ENCODE measurements at regions of chr10 and their contacts with region 1.

Region 1: GRCh38 chr10:44310762-44311562 is 73.9 kb downstream of the CXCL12 start:
- DNase-seq: peak; percentile 89 to 96 (median 96)
- ATAC-seq: peak; percentile 97 to 98
- H3K4me3 ChIP-seq: peak overlapping the region; percentile 16
- H3K27ac ChIP-seq: no peak overlapping the region
- H3K4me1 ChIP-seq: no peaks in the 10 kb centered on the region
- H3K27me3 ChIP-seq: no peaks in the 10 kb centered on the region

Region 2: DNA sequence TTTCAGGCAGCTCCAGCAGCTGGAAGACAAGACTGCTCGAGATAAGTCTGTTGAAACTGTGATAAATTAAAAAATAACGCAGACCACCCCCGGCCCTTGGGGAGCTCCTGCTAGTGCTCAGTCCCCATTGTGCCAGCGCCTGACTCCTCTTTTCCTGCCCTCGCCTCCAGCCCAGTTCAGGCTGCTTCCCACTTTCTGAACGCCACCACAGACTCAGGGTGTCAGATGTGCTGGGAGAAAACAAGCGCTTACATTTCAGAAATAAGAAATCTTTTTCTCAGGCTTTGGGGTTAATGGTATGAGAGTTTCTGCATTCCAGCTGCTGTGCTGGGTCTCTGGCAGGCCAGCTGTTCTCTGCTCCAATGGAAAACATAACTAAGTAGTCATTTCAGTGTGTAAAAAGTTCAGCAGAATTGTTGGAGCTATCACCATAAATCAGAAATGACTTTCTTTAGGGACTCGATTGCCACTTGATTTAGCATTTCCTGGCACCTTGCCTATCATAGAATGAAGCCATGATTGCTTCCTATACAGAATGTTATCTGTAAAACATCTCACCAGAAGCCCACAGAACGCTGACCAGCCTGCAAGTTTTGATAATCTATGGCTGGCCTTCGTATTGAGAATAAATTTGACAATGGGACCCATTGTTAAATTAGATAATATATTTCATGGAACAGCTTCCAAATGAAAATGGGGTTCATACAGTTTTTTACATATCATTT is 405.3 kb before region 1 on chr10:
- intact Hi-C with region 1: loop called in 1 of 4 experiments (anchors 10 kb)
- DNase-seq: peak; percentile 77 to 90 (median 89)
- ATAC-seq: peak; percentile 74 to 86
- H3K4me3 ChIP-seq: no peak overlapping the region
- H3K27ac ChIP-seq: peak overlapping the region; percentile 37
- H3K4me1 ChIP-seq: peaks cover 13% of the 10 kb centered on the region
- H3K27me3 ChIP-seq: no peaks in the 10 kb centered on the region

Region 3: DNA sequence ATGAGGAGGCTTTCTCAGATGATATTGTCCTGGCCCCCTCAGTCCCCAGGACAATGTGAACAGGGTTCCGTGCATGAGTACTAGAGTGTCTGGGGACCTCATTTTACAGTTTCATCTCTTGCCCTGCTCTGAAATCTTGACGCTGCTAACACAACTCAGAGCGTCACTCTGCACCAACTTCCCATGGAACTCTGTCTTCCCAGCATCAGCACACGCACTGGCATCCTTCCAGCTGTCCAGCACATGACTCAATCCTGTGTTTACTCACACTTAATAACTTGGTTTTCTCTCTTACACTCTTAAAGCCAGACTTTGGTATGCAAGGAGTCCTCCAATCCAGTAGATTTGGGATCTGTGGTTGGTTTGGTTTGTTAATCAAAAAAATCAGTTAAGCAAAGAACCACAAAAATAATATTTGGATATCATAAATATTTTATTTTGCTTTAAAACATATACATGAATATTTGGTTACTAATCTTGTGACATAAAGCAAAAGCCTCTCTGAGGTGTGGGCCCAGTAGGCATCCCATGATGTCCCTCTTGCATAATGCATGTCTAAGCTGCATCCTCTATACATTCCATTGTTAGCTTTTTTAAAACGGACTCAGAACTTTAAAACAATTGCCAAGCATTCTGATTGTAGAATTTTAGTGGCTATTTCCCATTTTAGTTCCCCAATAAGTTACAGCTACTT is 57.0 kb before region 1 on chr10:
- intact Hi-C with region 1: loop called in 1 of 4 experiments (anchors 10 kb)
- DNase-seq: peak; percentile 79 to 91 (median 81)
- ATAC-seq: peak; percentile 79 to 86
- H3K4me3 ChIP-seq: no peak overlapping the region
- H3K27ac ChIP-seq: no peak overlapping the region
- H3K4me1 ChIP-seq: no peaks in the 10 kb centered on the region
- H3K27me3 ChIP-seq: no peaks in the 10 kb centered on the region

Region 4: GRCh38 chr10:44857363-44858016 is 546.5 kb after region 1 on chr10:
- intact Hi-C with region 1: loop called in 1 of 4 experiments (anchors 10 kb)
- DNase-seq: peak; percentile 72 to 90 (median 88)
- ATAC-seq: peak; percentile 87 to 89
- H3K4me3 ChIP-seq: no peak overlapping the region
- H3K27ac ChIP-seq: no peak overlapping the region
- H3K4me1 ChIP-seq: no peaks in the 10 kb centered on the region
- H3K27me3 ChIP-seq: no peaks in the 10 kb centered on the region